CD8-positive, alpha-beta memory T cell (primary cell): ENCODE measurements at regions of chr16 and their contacts with region 1.

Region 1: DNA sequence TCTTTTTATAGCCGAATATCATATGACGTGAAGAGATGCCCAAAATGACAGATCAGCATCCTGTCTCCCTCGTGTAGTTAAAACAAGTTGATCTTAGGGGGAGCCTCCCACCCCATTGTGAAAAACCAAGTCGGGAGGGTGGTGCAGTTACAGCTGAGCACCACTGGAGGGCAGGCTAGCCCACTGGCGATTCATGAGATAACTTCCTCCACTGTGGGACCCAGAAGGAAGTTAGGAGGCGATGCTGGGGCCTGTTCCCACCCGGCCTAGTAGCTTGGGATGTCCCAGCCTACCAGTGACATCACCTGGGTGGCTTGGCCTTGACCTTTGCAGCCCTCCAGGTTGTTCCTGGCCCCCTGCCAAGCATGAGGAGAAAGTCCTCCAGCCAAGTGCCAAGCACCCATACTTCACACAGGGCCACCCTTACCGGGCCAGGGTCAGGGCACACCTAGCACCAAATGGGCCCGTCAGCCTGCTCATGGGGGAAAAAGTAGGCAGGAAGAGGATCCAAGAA is 8.1 kb upstream of the CPNE2 start:
- DNase-seq: peak; percentile 63 to 85 (median 78)
- H3K4me3 ChIP-seq: no peak overlapping the region
- H3K4me3 Mint-ChIP-seq: peak overlapping the region in 2 of 7 donors; percentile 17 to 76
- H3K27ac ChIP-seq: peak overlapping the region; percentile 21
- H3K27ac Mint-ChIP-seq: peak overlapping the region; percentile 29 to 96 (median 85)
- H3K4me1 ChIP-seq: peaks cover 12% of the 10 kb centered on the region
- H3K4me1 Mint-ChIP-seq: peaks cover 12 to 16% (median 14%) of the 10 kb centered on the region in 3 donors
- H3K27me3 ChIP-seq: no peaks in the 10 kb centered on the region
- H3K27me3 Mint-ChIP-seq: no peaks in the 10 kb centered on the region

Region 2: DNA sequence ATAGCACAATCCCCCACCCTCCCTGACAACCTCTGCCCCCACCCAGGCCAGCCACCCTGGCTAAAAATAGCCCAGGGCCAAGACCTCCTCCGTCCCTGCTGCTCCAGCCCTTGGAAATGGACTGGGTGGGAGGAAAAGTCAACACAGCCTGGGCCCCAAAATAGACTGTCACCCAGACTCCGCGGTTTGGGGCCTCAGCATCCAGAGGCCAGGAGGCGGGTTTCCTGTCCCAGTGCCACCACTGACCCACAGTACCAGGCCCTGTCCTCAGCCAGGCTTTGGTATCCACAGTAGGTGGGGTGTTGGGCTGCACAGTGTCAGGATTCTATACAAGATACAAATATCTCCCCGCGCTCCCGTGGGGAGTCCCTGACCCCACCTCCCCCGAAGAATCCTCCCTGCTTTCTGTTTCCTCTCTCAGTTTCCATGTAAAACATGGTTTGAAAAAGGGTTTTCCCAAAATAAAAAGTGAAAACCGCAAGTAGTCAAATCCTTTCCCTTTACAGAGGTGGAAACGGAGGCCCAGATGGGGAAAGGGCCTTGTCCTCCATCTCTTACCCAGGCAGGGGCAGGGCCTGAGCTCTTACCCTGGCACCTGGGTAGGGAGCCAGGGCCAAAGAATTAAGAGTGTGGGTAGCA is 28.2 kb after region 1 on chr16:
- CTCF ChIA-PET with region 1: no interaction called
- POLR2A ChIA-PET with region 1: no interaction called
- DNase-seq: no peak
- H3K4me3 ChIP-seq: no peak overlapping the region
- H3K4me3 Mint-ChIP-seq: no peak overlapping the region
- H3K27ac ChIP-seq: no peak overlapping the region
- H3K27ac Mint-ChIP-seq: peak overlapping the region in 1 of 8 donors; percentile 78
- H3K4me1 ChIP-seq: no peaks in the 10 kb centered on the region
- H3K4me1 Mint-ChIP-seq: no peaks in the 10 kb centered on the region
- H3K27me3 ChIP-seq: no peaks in the 10 kb centered on the region
- H3K27me3 Mint-ChIP-seq: no peaks in the 10 kb centered on the region

Region 3: DNA sequence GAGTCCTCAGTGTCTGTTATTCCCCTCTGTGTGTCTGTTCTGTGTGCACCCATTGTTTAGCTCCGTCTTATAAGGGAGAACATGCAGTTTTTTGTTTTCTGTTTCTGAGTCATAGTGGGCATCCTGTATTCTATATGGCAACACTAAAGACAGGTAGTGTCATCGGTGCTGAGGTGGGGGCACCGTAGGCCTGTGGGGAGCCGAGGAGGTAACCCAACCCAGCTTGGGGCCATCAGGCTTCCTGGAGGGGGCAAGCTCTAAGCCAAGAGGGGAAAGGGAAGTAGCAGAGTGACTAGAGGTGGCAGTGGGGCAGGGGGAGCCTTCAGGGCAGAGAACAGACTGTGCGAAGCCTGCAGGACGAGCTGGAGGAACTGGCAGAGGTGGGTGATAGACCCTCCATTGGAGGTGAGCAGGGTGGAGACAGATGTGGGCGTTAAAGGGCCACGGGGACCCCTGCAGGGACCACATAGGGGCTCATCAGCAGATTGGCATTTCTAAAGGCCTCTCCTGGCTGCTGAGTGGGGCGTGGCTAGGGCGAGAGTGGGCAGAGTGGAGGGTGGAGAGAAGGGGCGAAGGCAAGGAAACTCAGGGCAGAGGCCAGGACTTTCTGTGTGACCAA is 44.6 kb after region 1 on chr16:
- CTCF ChIA-PET with region 1: interaction called, 23 read pairs
- POLR2A ChIA-PET with region 1: interaction called, 3 read pairs
- DNase-seq: peak; percentile 36 to 84 (median 68)
- H3K4me3 ChIP-seq: peak overlapping the region; percentile 33
- H3K4me3 Mint-ChIP-seq: peak overlapping the region; percentile 65 to 92 (median 89)
- H3K27ac ChIP-seq: peak overlapping the region; percentile 35
- H3K27ac Mint-ChIP-seq: peak overlapping the region; percentile 83 to 98 (median 94)
- H3K4me1 ChIP-seq: peaks cover 91% of the 10 kb centered on the region
- H3K4me1 Mint-ChIP-seq: peaks cover 89 to 99% (median 95%) of the 10 kb centered on the region in 3 donors
- H3K27me3 ChIP-seq: no peaks in the 10 kb centered on the region
- H3K27me3 Mint-ChIP-seq: no peaks in the 10 kb centered on the region

Region 4: DNA sequence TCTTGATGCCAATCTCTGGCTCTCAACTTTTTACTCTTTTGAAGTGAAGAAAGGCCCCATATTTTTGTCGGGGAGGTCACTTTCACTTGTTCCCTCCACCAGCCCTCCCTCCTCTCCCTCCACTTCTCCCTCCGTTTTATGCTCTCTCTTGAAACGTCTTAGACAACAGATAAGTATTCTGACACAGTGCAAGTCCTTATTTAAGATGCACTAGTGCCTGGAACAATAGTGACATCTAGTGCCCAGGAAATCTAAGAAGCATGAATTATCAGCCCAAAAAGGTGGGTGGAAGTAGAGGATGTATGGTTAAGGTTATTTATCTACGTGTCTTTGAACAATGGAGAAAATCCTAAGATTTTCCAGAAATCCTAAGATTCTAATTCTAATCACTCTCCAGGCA is 83.6 kb after region 1 on chr16:
- CTCF ChIA-PET with region 1: interaction called, 13 read pairs
- POLR2A ChIA-PET with region 1: interaction called, 4 read pairs
- DNase-seq: peak in 2 of 5 donors; percentile 62 to 65
- H3K4me3 ChIP-seq: no peak overlapping the region
- H3K4me3 Mint-ChIP-seq: no peak overlapping the region
- H3K27ac ChIP-seq: no peak overlapping the region
- H3K27ac Mint-ChIP-seq: no peak overlapping the region
- H3K4me1 ChIP-seq: no peaks in the 10 kb centered on the region
- H3K4me1 Mint-ChIP-seq: peaks cover 5 to 21% (median 10%) of the 10 kb centered on the region in 3 donors
- H3K27me3 ChIP-seq: no peaks in the 10 kb centered on the region
- H3K27me3 Mint-ChIP-seq: peaks cover 0 to 1% of the 10 kb centered on the region in 2 donors

Region 5: GRCh38 chr16:57284208-57284951 is 200.1 kb after region 1 on chr16 and contains the start of gene PLLP:
- CTCF ChIA-PET with region 1: no interaction called
- POLR2A ChIA-PET with region 1: no interaction called
- DNase-seq: peak in 4 of 5 donors; percentile 13 to 59 (median 32)
- H3K4me3 ChIP-seq: peak within 1 kb of the TSS; percentile 53
- H3K4me3 Mint-ChIP-seq: peak within 1 kb of the TSS; percentile 58 to 89 (median 71)
- H3K27ac ChIP-seq: peak within 1 kb of the TSS; percentile 4
- H3K27ac Mint-ChIP-seq: peak within 1 kb of the TSS in 1 of 8 donors; percentile 21
- H3K4me1 ChIP-seq: peaks cover 16% of the 10 kb centered on the region
- H3K4me1 Mint-ChIP-seq: peaks cover 7 to 19% (median 17%) of the 10 kb centered on the region in 3 donors
- H3K27me3 ChIP-seq: peaks cover 10% of the 10 kb centered on the region
- H3K27me3 Mint-ChIP-seq: peaks cover 17 to 24% of the 10 kb centered on the region in 2 donors
- total RNA-seq, gene PLLP: 0.49 TPM in 1 of 2 experiments, not detected in the other